ENCODE measurements at regions of chr14 and their contacts with region 1.

Region 1: DNA sequence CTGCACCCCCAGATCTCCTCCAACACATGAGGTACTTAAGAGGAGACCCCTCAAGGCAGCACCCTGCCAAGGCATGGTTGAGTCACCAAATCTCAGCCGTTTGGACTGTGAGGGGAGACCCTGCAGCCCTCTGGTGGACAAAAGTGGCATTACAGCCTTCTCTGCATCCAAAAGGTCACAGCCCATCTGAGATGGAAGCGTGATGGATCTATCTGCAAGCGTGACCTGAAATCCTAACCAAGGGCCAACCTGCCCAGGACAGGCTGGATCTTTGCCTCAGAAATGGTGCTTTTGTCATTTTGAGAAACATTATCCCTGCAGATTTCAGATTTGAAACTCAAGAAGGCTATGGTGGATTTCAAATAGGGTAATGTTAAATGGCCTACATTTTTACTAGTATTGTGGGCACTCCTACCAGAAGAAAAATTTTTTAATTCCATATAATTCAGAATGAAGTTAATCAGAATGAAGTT is 23.7 kb upstream of the DHRS4 start:
- DNase-seq: peak; percentile 67 to 78
- ATAC-seq: peak; percentile 36 to 84 (median 80)
- H3K4me3 ChIP-seq: no peak overlapping the region
- H3K27ac ChIP-seq: no peak overlapping the region
- H3K4me1 ChIP-seq: no peaks in the 10 kb centered on the region
- H3K27me3 ChIP-seq: no peaks in the 10 kb centered on the region
- CTCF ChIP-seq: peak; percentile 88

Region 2: DNA sequence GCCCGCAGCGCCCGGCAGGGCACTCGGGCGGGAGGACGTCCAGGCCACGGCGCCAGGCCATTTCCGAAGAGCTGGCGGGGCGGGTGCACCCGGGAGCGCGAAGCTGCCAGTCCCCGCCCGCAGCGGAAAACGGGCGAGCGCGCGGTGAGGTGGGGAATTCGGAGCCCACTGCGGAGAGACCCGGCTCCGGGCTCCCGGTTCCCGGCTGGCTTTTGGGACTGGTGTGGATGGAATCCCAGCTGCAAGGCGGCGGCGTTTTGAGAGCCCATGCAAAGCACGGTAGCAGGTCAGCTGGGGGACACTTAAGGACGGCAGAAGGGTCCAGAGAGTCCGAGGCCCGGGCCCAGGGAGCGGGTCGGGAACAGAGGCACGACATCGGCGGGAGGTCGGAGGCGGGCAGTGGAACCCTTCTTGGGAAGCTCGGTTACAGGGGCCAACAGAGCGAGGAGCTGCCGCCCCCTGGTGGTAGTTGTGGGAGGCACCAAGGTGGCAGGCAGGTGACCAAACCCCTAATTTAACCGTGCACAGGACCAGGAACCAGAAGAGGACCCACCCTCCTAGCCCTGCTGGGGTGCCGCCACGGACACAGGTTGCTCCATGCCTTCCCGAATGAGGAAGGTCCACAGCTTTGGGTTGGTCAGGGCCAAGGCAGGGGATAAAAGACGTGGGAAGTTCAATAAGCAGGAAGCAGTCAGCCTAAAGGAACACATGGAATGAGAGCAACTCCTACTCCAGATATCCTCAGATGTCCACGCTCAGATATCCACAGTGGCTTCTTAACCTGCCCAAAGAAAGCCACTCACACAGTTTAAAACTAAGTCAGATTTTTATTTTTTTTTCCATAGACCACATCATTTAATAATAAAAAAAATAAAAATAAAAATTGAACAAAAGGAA is 871.9 kb before region 1 on chr14:
- intact Hi-C with region 1: no loop called
- DNase-seq: peak; percentile 81 to 92
- ATAC-seq: peak; percentile 76 to 86 (median 82)
- H3K4me3 ChIP-seq: peak overlapping the region; percentile 78
- H3K27ac ChIP-seq: peak overlapping the region; percentile 32
- H3K4me1 ChIP-seq: peaks cover 12% of the 10 kb centered on the region
- H3K27me3 ChIP-seq: no peaks in the 10 kb centered on the region
- CTCF ChIP-seq: peak; percentile 93

Region 3: GRCh38 chr14:23589606-23590005 is 340.3 kb before region 1 on chr14:
- intact Hi-C with region 1: loop called in 1 of 2 experiments (anchors 5 kb)
- DNase-seq: no peak
- ATAC-seq: no peak
- H3K4me3 ChIP-seq: no peak overlapping the region
- H3K27ac ChIP-seq: no peak overlapping the region
- H3K4me1 ChIP-seq: no peaks in the 10 kb centered on the region
- H3K27me3 ChIP-seq: peaks cover 0 to 9% (median 0%) of the 10 kb centered on the region in 3 donors
- CTCF ChIP-seq: no peak

Region 4: DNA sequence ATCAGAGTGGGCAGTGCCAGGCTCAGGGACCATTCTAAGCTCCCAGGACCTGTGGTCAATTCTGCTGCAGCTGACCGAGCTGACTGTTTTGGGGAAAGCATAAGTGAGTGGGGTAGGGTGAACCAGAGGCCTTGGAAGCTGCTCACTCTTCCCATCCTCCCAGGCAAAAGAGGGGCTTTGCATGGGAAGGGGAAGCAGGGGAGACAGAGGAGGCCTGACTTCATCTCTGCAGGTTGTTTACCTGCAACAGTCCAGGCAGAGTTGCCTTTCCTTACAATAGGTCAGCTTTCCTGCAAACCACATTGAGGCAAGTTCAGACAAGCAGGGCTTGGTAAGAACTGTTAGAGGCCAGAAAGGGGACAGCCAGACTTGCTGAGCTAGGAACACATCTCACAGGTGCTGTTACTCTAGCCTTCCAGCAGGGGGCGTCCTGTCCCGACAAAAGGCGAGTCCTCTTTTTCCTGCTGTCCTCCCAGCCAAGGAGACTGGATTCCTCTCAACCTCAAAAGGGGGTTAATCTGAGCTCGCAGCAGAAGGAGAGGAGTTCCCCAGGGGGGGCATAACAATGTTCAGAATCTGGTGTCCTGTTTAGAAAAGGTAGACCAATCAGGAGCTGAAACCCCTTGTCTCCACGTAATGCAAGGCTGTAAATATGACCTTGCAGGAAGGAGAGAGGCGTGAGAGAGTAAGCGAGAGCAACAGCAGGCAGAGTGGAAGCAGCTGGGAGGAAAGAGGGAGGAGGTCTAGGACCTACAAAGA is 298.0 kb before region 1 on chr14:
- intact Hi-C with region 1: loop called (anchors 2 to 5 kb)
- DNase-seq: peak; percentile 74 to 79
- ATAC-seq: peak; percentile 75 to 88 (median 82)
- H3K4me3 ChIP-seq: peak overlapping the region; percentile 17
- H3K27ac ChIP-seq: no peak overlapping the region
- H3K4me1 ChIP-seq: no peaks in the 10 kb centered on the region
- H3K27me3 ChIP-seq: peaks cover 0 to 4% (median 0%) of the 10 kb centered on the region in 3 donors
- CTCF ChIP-seq: peak; percentile 92